Activated B cell treated with CpG ODN at 0.5 μM for 24 hours (primary cell): ENCODE measurements at regions of chr11 and their contacts with region 1.

Region 1: GRCh38 chr11:102495161-102496042 is 35.1 kb downstream of the MMP7 start:
- DNase-seq: no peak
- ATAC-seq: peak; percentile 77
- H3K4me3 Mint-ChIP-seq: no peak overlapping the region
- H3K27ac Mint-ChIP-seq: peak overlapping the region; percentile 53
- H3K4me1 Mint-ChIP-seq: peaks cover 17% of the 10 kb centered on the region
- H3K27me3 Mint-ChIP-seq: no peaks in the 10 kb centered on the region
- CTCF ChIP-seq: no peak

Region 2: GRCh38 chr11:100761841-100762240 is 1733.6 kb before region 1 on chr11:
- CTCF ChIA-PET with region 1: no interaction called
- POLR2A ChIA-PET with region 1: no interaction called
- intact Hi-C with region 1: no loop called
- DNase-seq: no peak
- ATAC-seq: no peak
- H3K4me3 Mint-ChIP-seq: no peak overlapping the region
- H3K27ac Mint-ChIP-seq: no peak overlapping the region
- H3K4me1 Mint-ChIP-seq: peaks cover 2% of the 10 kb centered on the region
- H3K27me3 Mint-ChIP-seq: no peaks in the 10 kb centered on the region
- CTCF ChIP-seq: no peak

Region 3: GRCh38 chr11:102287964-102288724 is 207.3 kb before region 1 on chr11:
- CTCF ChIA-PET with region 1: interaction called, 15 read pairs
- POLR2A ChIA-PET with region 1: no interaction called
- intact Hi-C with region 1: loop called (anchors 1 kb)
- DNase-seq: no peak
- ATAC-seq: peak; percentile 84
- H3K4me3 Mint-ChIP-seq: peak overlapping the region; percentile 74
- H3K27ac Mint-ChIP-seq: peak overlapping the region; percentile 57
- H3K4me1 Mint-ChIP-seq: peaks cover 37% of the 10 kb centered on the region
- H3K27me3 Mint-ChIP-seq: no peaks in the 10 kb centered on the region
- CTCF ChIP-seq: no peak

Region 4: DNA sequence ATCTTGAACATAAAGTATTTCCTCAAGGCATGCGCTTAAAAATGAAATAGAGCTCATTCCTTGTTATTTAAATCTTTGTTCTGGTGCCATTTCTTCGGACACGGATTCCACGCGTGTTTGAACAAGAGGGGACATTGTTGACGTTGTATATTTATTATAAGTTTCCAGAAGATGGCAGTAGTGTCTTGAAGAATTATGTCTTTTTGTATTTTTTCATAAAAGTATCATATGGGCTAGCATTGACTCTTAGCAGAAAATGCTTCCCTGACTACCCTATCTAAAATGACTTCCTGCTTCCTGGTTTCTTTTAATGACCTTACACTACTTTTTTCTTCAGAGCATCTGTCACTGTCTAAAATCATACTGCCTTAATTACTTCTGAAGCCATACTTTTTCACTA is 128.0 kb before region 1 on chr11:
- CTCF ChIA-PET with region 1: interaction called, 18 read pairs
- POLR2A ChIA-PET with region 1: no interaction called
- intact Hi-C with region 1: loop called (anchors 1 kb)
- DNase-seq: no peak
- ATAC-seq: no peak
- H3K4me3 Mint-ChIP-seq: no peak overlapping the region
- H3K27ac Mint-ChIP-seq: peak overlapping the region; percentile 21
- H3K4me1 Mint-ChIP-seq: peaks cover 14% of the 10 kb centered on the region
- H3K27me3 Mint-ChIP-seq: no peaks in the 10 kb centered on the region
- CTCF ChIP-seq: no peak

Region 5: GRCh38 chr11:102430158-102430836 is 65.1 kb before region 1 on chr11:
- CTCF ChIA-PET with region 1: interaction called, 4 read pairs
- POLR2A ChIA-PET with region 1: no interaction called
- intact Hi-C with region 1: loop called (anchors 1 kb)
- DNase-seq: no peak
- ATAC-seq: peak; percentile 84
- H3K4me3 Mint-ChIP-seq: peak overlapping the region; percentile 39
- H3K27ac Mint-ChIP-seq: peak overlapping the region; percentile 72
- H3K4me1 Mint-ChIP-seq: peaks cover 56% of the 10 kb centered on the region
- H3K27me3 Mint-ChIP-seq: no peaks in the 10 kb centered on the region
- CTCF ChIP-seq: no peak